Mammary epithelial cell (primary cell): ENCODE measurements at regions of chr7 and their contacts with region 1.

Region 1: GRCh38 chr7:19442016-19442785 is 266.6 kb downstream of the POLR1F start:
- DNase-seq: peak; percentile 26
- H3K4me3 ChIP-seq: no peak overlapping the region
- H3K27ac ChIP-seq: no peak overlapping the region
- H3K4me1 ChIP-seq: no peaks in the 10 kb centered on the region
- H3K27me3 ChIP-seq: peaks cover 2% of the 10 kb centered on the region
- CTCF ChIP-seq: peak; percentile 59 to 69

Region 2: GRCh38 chr7:18590744-18591340 is 851.4 kb before region 1 on chr7:
- CTCF ChIA-PET with region 1: no interaction called
- dilution Hi-C with region 1: no loop called
- in situ Hi-C with region 1: no loop called
- intact Hi-C with region 1: loop called (anchors 5 kb)
- DNase-seq: peak; percentile 26
- H3K4me3 ChIP-seq: no peak overlapping the region
- H3K27ac ChIP-seq: no peak overlapping the region
- H3K4me1 ChIP-seq: no peaks in the 10 kb centered on the region
- H3K27me3 ChIP-seq: no peaks in the 10 kb centered on the region
- CTCF ChIP-seq: peak; percentile 41 to 51

Region 3: DNA sequence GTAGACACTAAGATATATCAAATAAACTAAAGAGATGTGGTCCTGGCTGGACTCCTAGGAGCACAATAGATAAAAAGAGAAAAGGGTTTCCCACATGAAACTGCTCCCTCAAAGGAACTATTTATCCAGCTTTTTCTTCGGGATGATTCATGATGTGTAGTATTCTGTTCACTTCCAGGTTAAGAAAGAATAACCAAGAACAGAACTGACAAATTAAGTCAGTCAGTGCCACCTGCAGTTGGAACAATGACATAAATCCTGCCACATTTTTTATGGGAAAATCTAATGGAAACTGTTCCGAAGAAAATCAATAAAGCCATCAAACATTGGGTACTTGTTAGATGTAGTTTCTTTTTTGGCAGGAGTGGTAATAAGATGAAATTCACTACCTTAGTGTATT is 179.5 kb after region 1 on chr7:
- CTCF ChIA-PET with region 1: no interaction called
- dilution Hi-C with region 1: no loop called
- in situ Hi-C with region 1: no loop called
- intact Hi-C with region 1: loop called (anchors 5 kb)
- DNase-seq: peak; percentile 58
- H3K4me3 ChIP-seq: no peak overlapping the region
- H3K27ac ChIP-seq: no peak overlapping the region
- H3K4me1 ChIP-seq: no peaks in the 10 kb centered on the region
- H3K27me3 ChIP-seq: no peaks in the 10 kb centered on the region
- CTCF ChIP-seq: peak; percentile 23 to 51